Activated CD4-positive, alpha-beta T cell treated with anti-CD3 and anti-CD28 coated beads for 36 hours (primary cell): ENCODE measurements at regions of chr12 and their contacts with region 1.

Region 1: DNA sequence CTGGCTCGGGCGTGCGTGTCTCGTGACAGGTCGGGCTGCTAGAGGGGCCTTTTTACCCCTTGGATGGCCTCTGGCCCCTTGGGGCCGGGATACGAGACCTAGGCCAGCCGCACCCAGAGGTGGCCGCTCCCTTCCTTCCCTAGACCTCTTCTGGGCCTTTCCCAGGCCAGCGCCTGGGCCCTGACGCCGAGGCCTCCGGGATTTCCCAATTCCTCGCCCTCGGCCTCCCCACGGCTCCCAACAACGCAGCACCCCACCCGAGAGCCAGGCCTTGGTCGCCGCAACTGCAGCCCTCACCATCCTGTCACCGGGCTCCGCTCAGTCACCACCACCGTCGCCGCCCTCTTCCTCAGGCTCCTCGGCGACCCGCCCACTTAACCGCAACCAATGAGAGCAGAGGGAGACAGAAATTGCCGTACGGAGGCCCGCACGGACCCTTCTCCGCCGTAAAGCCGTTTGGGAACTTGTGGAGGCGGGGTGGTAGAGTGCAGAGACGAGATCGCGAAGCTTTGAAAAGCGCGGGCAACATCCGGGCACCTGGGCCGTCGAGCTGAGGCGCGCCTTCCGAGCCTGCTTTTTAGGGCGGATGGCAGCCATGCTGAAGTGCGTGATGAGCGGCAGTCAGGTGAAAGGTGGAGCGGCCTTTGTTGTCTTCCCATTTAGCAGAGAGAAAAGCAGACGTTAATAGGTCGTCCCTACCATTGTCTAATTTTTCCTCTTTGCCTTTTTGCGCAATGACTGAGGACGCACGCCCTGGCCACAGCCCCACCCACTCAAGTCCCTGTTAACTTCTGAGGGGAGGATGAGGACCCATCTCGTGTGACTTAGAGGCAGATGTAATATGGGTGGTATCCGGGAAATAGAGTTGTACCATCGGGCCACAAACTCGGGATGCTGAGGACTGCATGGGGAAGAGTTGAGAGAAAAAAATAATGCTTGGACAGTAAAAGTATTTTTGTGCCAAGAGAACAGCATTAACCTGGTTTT is at the starts of genes RAD9B and VPS29:
- DNase-seq: peak; percentile 100
- ATAC-seq: peak; percentile 97
- H3K4me3 Mint-ChIP-seq: peak within 1 kb of the TSS; percentile 95
- H3K27ac Mint-ChIP-seq: peak within 1 kb of the TSS; percentile 94
- H3K4me1 Mint-ChIP-seq: peaks cover 28% of the 10 kb centered on the region
- H3K27me3 Mint-ChIP-seq: no peaks in the 10 kb centered on the region
- total RNA-seq, gene RAD9B: 1.5 to 2.2 TPM
- total RNA-seq, gene VPS29: 84.4 to 103 TPM

Region 2: GRCh38 chr12:109995686-109996482 is 506.2 kb before region 1 on chr12 and contains the start of gene GIT2:
- CTCF ChIA-PET with region 1: no interaction called
- POLR2A ChIA-PET with region 1: interaction called, 3 read pairs
- intact Hi-C with region 1: loop called in 1 of 2 experiments (anchors 2 kb)
- DNase-seq: peak; percentile 98
- ATAC-seq: peak; percentile 85
- H3K4me3 Mint-ChIP-seq: peak within 1 kb of the TSS; percentile 99
- H3K27ac Mint-ChIP-seq: peak within 1 kb of the TSS; percentile 97
- H3K4me1 Mint-ChIP-seq: peaks cover 65% of the 10 kb centered on the region
- H3K27me3 Mint-ChIP-seq: no peaks in the 10 kb centered on the region
- total RNA-seq, gene GIT2: 50.2 to 58.2 TPM

Region 3: DNA sequence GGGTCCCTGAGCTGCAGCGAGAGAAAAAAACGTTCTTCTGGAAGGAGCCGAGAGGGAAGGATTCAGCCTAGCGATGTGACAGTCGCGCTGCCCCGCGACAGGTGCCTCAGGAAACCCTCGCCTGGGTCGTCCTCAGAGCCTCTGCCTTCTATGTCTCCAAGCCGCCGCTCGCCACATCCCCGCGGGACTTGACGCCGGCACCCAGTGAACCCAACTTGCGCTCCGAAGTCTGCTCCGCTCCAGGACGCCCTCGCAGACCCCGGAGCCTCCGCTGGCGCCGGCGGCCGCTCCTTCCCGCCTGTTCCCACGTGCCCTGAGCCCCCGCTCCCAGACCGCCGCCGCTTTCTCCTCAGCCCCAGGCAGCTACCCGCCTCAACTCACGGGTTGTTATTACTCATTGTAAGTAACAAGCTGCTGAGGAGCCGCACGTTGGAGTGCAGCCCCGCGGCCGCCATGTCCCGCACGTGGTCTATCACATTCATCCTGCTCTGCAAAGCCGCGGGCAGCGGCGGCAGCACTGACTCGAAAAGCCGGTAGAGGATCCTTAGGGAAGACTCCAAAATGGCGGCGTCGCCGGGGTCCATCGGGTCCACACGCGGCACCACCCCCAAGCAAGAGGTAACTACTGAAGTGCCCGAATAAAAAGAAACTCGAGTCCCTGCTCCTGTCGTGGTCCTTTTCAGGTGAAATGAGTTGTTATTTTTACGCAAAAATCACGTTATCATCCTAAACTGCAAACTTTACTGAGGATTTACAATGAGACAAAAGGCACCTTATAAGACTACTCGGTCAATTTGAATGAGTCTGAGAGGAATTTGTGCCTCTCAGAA is 98.7 kb before region 1 on chr12 and contains the start of gene ANAPC7:
- CTCF ChIA-PET with region 1: no interaction called
- POLR2A ChIA-PET with region 1: interaction called, 3 read pairs
- intact Hi-C with region 1: loop called in 1 of 2 experiments (anchors 1 kb)
- DNase-seq: peak; percentile 93
- ATAC-seq: peak; percentile 94
- H3K4me3 Mint-ChIP-seq: peak within 1 kb of the TSS; percentile 88
- H3K27ac Mint-ChIP-seq: peak within 1 kb of the TSS; percentile 99
- H3K4me1 Mint-ChIP-seq: peaks cover 21% of the 10 kb centered on the region
- H3K27me3 Mint-ChIP-seq: no peaks in the 10 kb centered on the region
- total RNA-seq, gene ANAPC7: 52.6 to 63.6 TPM

Region 4: GRCh38 chr12:110577717-110578521 is 75.9 kb after region 1 on chr12:
- CTCF ChIA-PET with region 1: no interaction called
- POLR2A ChIA-PET with region 1: interaction called, 5 read pairs
- intact Hi-C with region 1: loop called in 1 of 2 experiments (anchors 1 kb)
- DNase-seq: peak; percentile 61
- ATAC-seq: peak; percentile 67
- H3K4me3 Mint-ChIP-seq: peak overlapping the region; percentile 91
- H3K27ac Mint-ChIP-seq: peak overlapping the region; percentile 100
- H3K4me1 Mint-ChIP-seq: peaks cover 80% of the 10 kb centered on the region
- H3K27me3 Mint-ChIP-seq: no peaks in the 10 kb centered on the region

Region 5: DNA sequence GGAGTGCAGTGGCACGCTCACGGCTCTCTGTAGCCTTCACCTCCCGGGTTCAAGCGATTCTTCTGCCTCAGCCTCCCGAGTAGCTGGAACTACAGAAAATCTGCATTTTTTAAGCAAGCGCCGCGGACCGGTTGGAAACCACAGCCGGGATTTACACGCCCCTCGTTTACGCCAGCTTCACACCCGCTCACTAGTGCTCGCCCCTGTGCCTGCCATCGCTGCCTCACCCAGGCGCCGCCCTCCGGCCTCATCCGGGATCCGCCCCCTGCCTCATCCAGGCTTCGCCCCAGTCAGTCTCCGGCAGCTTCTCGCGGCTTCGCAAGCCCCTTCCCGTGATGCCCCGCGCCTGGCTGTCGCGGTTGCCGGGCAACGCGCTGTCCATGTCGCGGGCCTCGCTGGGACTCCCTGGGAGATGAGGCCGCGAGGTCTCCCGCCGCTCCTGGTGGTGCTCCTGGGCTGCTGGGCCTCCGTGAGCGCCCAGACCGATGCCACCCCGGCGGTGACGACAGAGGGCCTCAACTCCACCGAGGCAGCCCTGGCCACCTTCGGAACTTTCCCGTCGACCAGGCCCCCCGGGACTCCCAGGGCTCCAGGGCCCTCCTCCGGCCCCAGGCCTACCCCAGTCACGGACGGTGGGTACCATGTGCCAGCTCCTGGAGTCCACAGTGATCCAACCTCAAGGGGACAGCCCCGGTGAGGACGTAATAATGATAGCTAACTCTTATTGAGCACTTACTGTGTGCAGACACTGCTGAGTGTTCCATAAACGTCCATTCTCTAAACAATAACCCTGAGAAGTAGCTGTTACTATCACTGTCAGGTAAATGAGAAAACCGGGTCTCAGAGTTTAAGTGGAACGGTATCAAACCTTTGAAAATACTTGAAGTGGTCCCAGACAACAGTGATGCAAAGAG is 112.0 kb after region 1 on chr12 and contains the start of gene TCTN1:
- CTCF ChIA-PET with region 1: interaction called, 240 read pairs
- POLR2A ChIA-PET with region 1: interaction called, 8 read pairs
- intact Hi-C with region 1: loop called in 1 of 2 experiments (anchors 1 kb)
- DNase-seq: peak; percentile 99
- ATAC-seq: peak; percentile 99
- H3K4me3 Mint-ChIP-seq: peak within 1 kb of the TSS; percentile 78
- H3K27ac Mint-ChIP-seq: peak within 1 kb of the TSS; percentile 67
- H3K4me1 Mint-ChIP-seq: peaks cover 12% of the 10 kb centered on the region
- H3K27me3 Mint-ChIP-seq: no peaks in the 10 kb centered on the region
- total RNA-seq, gene TCTN1: 7.2 to 7.3 TPM

Region 6: GRCh38 chr12:110742718-110743570 is 240.9 kb after region 1 on chr12 and contains the start of gene PPP1CC:
- CTCF ChIA-PET with region 1: no interaction called
- POLR2A ChIA-PET with region 1: no interaction called
- intact Hi-C with region 1: loop called (anchors 2 to 5 kb)
- DNase-seq: peak; percentile 95
- ATAC-seq: peak; percentile 85
- H3K4me3 Mint-ChIP-seq: peak within 1 kb of the TSS; percentile 98
- H3K27ac Mint-ChIP-seq: peak within 1 kb of the TSS; percentile 99
- H3K4me1 Mint-ChIP-seq: peaks cover 34% of the 10 kb centered on the region
- H3K27me3 Mint-ChIP-seq: no peaks in the 10 kb centered on the region
- total RNA-seq, gene PPP1CC: 201 to 283 TPM